Transverse colon (tissue), 4 donors: ENCODE measurements at regions of chr22 and their contacts with region 1.

Region 1: DNA sequence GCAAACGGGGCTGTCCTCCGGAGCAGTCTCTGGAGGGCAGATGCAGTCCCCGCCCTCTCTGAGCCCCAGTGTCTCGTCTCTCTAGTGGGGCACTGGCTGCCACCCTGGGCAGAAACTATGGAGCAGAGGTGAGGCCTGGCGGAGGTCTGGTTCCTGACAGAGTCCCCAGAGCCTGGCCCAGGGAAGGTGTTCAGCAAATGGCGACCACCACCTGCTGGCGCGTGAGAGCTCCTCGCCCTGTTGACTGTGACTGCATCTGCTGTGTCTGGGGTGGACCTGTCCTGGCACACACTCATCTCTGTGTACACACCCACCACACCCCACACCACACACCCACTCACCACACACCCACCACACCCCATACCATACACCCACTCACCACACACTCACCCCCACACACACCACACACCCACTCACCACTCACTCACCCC is 18.3 kb upstream of the TTLL12 start:
- DNase-seq: no peak
- H3K4me3 ChIP-seq: no peak overlapping the region
- H3K27ac ChIP-seq: no peak overlapping the region
- H3K4me1 ChIP-seq: no peaks in the 10 kb centered on the region
- H3K27me3 ChIP-seq: no peaks in the 10 kb centered on the region
- CTCF ChIP-seq: no peak
- EP300 ChIP-seq: no peak
- POLR2A ChIP-seq: no peak

Region 2: GRCh38 chr22:41873391-41873790 is 1331.9 kb before region 1 on chr22:
- in situ Hi-C with region 1: no loop called
- intact Hi-C with region 1: no loop called
- DNase-seq: no peak
- H3K4me3 ChIP-seq: no peak overlapping the region
- H3K27ac ChIP-seq: no peak overlapping the region
- H3K4me1 ChIP-seq: no peaks in the 10 kb centered on the region
- H3K27me3 ChIP-seq: no peaks in the 10 kb centered on the region
- CTCF ChIP-seq: no peak
- EP300 ChIP-seq: no peak
- POLR2A ChIP-seq: no peak

Region 3: GRCh38 chr22:42978453-42979103 is 226.7 kb before region 1 on chr22:
- in situ Hi-C with region 1: no loop called
- intact Hi-C with region 1: no loop called
- DNase-seq: no peak
- H3K4me3 ChIP-seq: no peak overlapping the region
- H3K27ac ChIP-seq: peak overlapping the region; percentile 27 to 61 (median 47)
- H3K4me1 ChIP-seq: peaks cover 28 to 64% (median 42%) of the 10 kb centered on the region in 4 donors
- H3K27me3 ChIP-seq: no peaks in the 10 kb centered on the region
- CTCF ChIP-seq: no peak
- EP300 ChIP-seq: no peak
- POLR2A ChIP-seq: no peak

Region 4: DNA sequence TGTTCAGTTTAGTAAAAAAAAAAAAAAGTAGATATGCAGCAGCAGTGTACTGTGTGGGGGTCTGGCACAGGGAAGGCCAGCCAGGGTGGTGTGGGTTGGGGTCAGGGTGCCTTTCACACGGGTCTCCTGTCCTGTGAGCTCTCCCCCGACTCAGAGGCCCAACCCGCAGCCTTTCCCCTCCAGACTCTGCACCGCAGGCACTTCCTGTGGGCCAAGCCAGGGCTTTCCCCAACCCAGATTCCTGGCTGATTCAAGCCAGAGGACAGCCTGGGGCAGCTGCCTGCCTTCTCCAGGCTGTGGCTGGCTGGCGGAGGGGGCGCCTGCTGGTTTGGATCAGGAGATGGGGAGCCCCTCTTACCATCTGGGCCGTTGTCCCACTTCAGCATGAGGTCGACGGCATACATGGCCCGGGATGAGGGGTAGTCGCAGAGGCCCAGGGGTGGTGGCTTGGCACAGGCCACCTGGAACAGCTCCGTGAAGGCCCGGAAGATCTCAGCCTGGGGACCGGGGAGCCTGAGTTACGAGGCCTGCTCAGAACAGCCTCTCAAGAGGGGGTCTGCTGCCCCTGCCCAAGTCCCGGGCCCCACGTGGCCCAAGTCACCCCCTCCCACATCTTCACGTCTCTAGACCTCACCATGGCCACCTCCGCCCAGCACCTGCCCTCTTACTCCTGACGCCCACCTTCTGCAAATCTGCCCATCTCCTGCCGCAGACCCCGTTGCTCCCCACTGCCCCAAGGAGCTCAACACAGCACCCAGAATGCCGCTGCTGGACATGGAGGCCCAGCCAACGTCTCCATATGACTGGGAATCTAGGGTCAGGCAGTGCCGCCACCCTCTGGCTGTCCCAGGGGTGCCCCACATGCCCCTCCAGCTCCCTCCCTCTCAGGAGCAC is 36.6 kb before region 1 on chr22:
- in situ Hi-C with region 1: no loop called
- intact Hi-C with region 1: no loop called
- DNase-seq: no peak
- H3K4me3 ChIP-seq: no peak overlapping the region
- H3K27ac ChIP-seq: no peak overlapping the region
- H3K4me1 ChIP-seq: peaks cover 0 to 19% (median 17%) of the 10 kb centered on the region in 4 donors
- H3K27me3 ChIP-seq: no peaks in the 10 kb centered on the region
- CTCF ChIP-seq: no peak
- EP300 ChIP-seq: no peak
- POLR2A ChIP-seq: no peak

Region 5: GRCh38 chr22:43481568-43482317 is 276.5 kb after region 1 on chr22:
- in situ Hi-C with region 1: no loop called
- intact Hi-C with region 1: loop called (anchors 5 kb)
- DNase-seq: no peak
- H3K4me3 ChIP-seq: no peak overlapping the region
- H3K27ac ChIP-seq: no peak overlapping the region
- H3K4me1 ChIP-seq: no peaks in the 10 kb centered on the region
- H3K27me3 ChIP-seq: no peaks in the 10 kb centered on the region
- CTCF ChIP-seq: no peak
- EP300 ChIP-seq: no peak
- POLR2A ChIP-seq: no peak